GM10248 (cell line): ENCODE measurements at regions of chr1 and their contacts with region 1.

Region 1: GRCh38 chr1:101178688-101179491 is 57.9 kb upstream of the S1PR1 start:
- DNase-seq: peak; percentile 62
- CTCF ChIP-seq: no peak

Region 2: DNA sequence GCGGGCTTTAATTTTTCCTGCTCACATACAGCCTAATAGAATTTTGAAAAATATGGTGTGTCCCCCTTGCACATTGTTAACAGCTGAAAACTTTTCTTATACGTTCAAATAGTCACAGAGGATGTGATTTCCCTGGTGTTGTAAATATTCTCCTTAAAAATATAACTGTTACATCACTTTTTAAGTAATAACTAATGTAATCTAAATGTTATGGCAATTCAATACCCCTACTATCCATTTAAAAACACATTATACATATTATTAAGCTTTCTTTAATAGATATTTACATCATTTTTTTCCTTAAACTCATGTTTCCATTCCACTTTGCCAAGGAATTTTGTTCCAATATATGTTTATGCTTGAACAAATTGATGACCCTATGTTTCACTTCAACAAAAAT is 27.6 kb before region 1 on chr1:
- CTCF ChIA-PET with region 1: no interaction called
- POLR2A ChIA-PET with region 1: no interaction called
- DNase-seq: no peak
- CTCF ChIP-seq: no peak

Region 3: DNA sequence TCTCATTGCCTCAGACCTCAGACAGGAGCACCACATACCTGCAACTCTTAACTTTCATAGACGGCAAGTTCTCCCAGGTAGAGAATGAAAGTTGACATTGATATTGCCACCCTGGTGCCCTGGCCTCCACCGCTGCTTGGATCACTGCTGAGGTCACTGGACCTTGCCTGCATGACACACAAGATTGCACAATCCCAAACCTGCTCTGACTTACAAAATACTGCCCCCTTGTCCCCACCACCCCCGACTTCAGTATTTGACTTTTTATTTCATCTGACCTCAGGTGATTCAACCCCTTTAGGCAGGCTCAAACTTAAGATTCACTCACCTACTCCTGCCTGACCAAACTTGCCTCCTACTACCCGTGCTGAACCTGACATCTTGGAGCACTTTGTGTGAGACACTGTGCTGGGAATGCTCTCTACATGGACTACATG is 14.9 kb after region 1 on chr1:
- CTCF ChIA-PET with region 1: interaction called, 14 read pairs
- POLR2A ChIA-PET with region 1: no interaction called
- DNase-seq: no peak
- CTCF ChIP-seq: no peak

Region 4: GRCh38 chr1:101203820-101204540 is 25.1 kb after region 1 on chr1:
- CTCF ChIA-PET with region 1: interaction called, 14 read pairs
- POLR2A ChIA-PET with region 1: no interaction called
- DNase-seq: no peak
- CTCF ChIP-seq: no peak